OCI-LY7 (cell line): ENCODE measurements at regions of chr19 and their contacts with region 1.

Region 1: DNA sequence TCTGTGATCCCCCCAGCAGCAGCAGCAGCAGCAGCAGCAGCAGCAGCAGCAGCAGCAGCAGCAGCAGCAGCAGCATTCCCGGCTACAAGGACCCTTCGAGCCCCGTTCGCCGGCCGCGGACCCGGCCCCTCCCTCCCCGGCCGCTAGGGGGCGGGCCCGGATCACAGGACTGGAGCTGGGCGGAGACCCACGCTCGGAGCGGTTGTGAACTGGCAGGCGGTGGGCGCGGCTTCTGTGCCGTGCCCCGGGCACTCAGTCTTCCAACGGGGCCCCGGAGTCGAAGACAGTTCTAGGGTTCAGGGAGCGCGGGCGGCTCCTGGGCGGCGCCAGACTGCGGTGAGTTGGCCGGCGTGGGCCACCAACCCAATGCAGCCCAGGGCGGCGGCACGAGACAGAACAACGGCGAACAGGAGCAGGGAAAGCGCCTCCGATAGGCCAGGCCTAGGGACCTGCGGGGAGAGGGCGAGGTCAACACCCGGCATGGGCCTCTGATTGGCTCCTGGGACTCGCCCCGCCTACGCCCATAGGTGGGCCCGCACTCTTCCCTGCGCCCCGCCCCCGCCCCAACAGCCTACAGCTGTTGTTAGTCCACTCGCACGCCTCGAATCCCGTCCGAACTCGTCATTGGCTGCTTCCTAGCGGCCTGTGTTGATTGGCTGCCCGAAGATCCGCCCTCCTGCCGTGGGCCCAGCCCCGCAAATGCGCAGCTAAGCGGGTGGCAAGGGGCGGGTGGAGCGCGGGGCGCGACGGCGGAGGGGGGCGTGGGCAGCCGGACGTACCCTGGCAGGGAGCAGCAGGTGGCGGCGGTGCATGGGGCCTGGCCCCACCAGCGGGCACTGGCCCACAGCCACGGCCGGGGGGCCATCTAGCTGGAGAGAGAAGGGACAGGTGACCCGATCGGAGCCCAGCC is 1.4 kb upstream of the SIX5 start:
- DNase-seq: peak; percentile 97
- H3K4me3 ChIP-seq: peak overlapping the region; percentile 71
- H3K27ac ChIP-seq: peak overlapping the region; percentile 71
- H3K4me1 ChIP-seq: peaks cover 33% of the 10 kb centered on the region
- CTCF ChIP-seq: peak; percentile 93

Region 2: DNA sequence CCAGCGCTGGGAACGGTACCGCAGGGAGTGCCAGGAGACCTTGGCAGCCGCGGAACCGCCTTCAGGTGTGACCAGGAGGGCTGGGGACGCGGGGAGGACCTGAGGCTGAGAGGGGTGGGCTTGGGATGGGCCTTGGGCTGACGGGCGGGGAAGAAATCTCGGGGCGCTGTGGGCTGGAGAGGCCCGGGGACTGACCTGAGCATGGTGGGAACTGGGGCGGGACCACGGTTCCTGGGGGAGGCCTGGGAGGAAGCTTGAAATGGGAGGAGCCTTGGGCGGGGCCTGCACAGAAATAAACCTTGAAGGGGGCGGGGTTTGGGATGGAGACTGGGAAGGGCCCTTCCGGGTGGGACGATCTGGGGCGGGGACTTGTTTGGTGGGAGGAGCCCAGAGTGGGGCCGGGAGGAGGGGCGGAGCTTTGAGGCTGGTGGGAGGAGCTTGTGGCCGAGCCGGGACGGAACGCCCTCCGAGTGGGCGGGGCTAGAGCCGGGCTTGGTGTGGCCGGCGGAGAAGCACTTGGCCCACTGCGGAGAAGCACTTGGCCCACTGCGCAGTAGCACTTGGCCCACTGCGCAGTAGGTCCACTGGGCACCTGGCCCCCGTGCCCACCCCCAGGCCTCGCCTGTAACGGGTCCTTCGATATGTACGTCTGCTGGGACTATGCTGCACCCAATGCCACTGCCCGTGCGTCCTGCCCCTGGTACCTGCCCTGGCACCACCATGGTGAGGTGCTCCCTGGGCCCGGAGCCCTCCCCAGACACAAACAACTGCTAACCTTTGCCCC is 99.6 kb before region 1 on chr19:
- CTCF ChIA-PET with region 1: interaction called, 10 read pairs
- POLR2A ChIA-PET with region 1: no interaction called
- intact Hi-C with region 1: no loop called
- DNase-seq: peak; percentile 91
- H3K4me3 ChIP-seq: peak overlapping the region; percentile 47
- H3K27ac ChIP-seq: no peak overlapping the region
- H3K4me1 ChIP-seq: peaks cover 52% of the 10 kb centered on the region
- CTCF ChIP-seq: no peak

Region 3: DNA sequence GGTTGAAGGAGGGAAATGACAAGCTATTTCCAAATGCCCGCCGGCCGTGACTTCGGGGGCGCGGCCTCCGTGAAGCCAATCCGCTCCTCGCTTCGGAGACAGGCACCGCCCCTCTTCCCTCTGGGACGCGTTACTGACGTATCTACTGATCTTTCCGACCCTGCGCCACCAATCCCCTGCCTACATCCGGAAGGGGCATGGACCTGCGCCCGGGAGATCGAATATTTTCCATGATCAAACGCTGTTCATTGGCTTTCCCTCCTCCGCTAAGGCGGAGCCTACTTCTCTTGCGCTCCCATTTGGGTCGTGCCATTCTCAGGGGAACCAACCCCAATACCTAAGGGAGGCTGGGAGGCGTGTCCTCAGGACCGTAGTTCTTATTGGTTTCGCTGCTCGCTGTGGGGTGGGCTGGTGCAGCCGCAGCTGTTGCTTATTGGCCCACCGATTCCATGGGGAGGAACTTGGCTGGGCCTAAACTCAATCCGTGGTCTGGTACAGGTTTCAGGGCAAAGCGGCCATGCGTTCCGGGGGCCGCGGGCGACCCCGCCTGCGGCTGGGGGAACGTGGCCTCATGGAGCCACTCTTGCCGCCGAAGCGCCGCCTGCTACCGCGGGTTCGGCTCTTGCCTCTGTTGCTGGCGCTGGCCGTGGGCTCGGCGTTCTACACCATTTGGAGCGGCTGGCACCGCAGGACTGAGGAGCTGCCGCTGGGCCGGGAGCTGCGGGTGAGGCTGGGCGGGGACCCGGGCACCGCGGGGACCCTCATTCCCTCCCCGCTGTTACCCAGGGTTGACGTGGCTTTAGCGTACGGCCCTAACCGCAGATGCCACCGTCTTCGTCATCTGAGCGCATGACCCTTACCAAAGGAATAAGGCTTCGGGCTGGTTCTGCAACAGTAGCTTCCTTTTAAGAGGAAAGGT is 78.0 kb before region 1 on chr19 and contains the start of gene QPCTL:
- CTCF ChIA-PET with region 1: no interaction called
- POLR2A ChIA-PET with region 1: no interaction called
- intact Hi-C with region 1: loop called (anchors 5 kb)
- DNase-seq: peak; percentile 100
- H3K4me3 ChIP-seq: peak within 1 kb of the TSS; percentile 93
- H3K27ac ChIP-seq: peak within 1 kb of the TSS; percentile 72
- H3K4me1 ChIP-seq: peaks cover 15% of the 10 kb centered on the region
- CTCF ChIP-seq: no peak
- total RNA-seq, gene QPCTL: 15.7 and 24.8 TPM in 2 replicates

Region 4: GRCh38 chr19:45705115-45705514 is 65.3 kb before region 1 on chr19:
- CTCF ChIA-PET with region 1: no interaction called
- POLR2A ChIA-PET with region 1: no interaction called
- intact Hi-C with region 1: loop called (anchors 1 kb)
- DNase-seq: no peak
- H3K4me3 ChIP-seq: no peak overlapping the region
- H3K27ac ChIP-seq: peak overlapping the region; percentile 43
- H3K4me1 ChIP-seq: peaks cover 48% of the 10 kb centered on the region
- CTCF ChIP-seq: no peak

Region 5: GRCh38 chr19:45798995-45799517 is 28.6 kb after region 1 on chr19:
- CTCF ChIA-PET with region 1: interaction called, 5 read pairs
- POLR2A ChIA-PET with region 1: interaction called, 4 read pairs
- intact Hi-C with region 1: loop called (anchors 1 kb)
- DNase-seq: peak; percentile 70
- H3K4me3 ChIP-seq: no peak overlapping the region
- H3K27ac ChIP-seq: no peak overlapping the region
- H3K4me1 ChIP-seq: peaks cover 11% of the 10 kb centered on the region
- CTCF ChIP-seq: peak; percentile 87